ENCODE measurements at regions of chr3 and their contacts with region 1.

Region 1: GRCh38 chr3:25582242-25582641 is 82.5 kb downstream of the TOP2B start:
- DNase-seq: no peak
- ATAC-seq: no peak
- H3K4me3 ChIP-seq: no peak overlapping the region
- H3K27ac ChIP-seq: no peak overlapping the region
- H3K4me1 ChIP-seq: no peaks in the 10 kb centered on the region
- H3K27me3 ChIP-seq: no peaks in the 10 kb centered on the region
- CTCF ChIP-seq: no peak
- POLR2A ChIP-seq: no peak

Region 2: GRCh38 chr3:24773798-24774197 is 808.4 kb before region 1 on chr3:
- intact Hi-C with region 1: loop called (anchors 10 kb)
- DNase-seq: peak; percentile 29 to 53 (median 40)
- ATAC-seq: peak; percentile 71
- H3K4me3 ChIP-seq: no peak overlapping the region
- H3K27ac ChIP-seq: no peak overlapping the region
- H3K4me1 ChIP-seq: no peaks in the 10 kb centered on the region
- H3K27me3 ChIP-seq: no peaks in the 10 kb centered on the region
- CTCF ChIP-seq: peak; percentile 51 to 80 (median 64)
- POLR2A ChIP-seq: no peak

Region 3: GRCh38 chr3:25633919-25634318 is 51.7 kb after region 1 on chr3:
- intact Hi-C with region 1: no loop called
- DNase-seq: no peak
- ATAC-seq: no peak
- H3K4me3 ChIP-seq: no peak overlapping the region
- H3K27ac ChIP-seq: no peak overlapping the region
- H3K4me1 ChIP-seq: no peaks in the 10 kb centered on the region
- H3K27me3 ChIP-seq: no peaks in the 10 kb centered on the region
- CTCF ChIP-seq: no peak
- POLR2A ChIP-seq: no peak